A673 (cell line): ENCODE measurements at regions of chr10 and their contacts with region 1.

Region 1: DNA sequence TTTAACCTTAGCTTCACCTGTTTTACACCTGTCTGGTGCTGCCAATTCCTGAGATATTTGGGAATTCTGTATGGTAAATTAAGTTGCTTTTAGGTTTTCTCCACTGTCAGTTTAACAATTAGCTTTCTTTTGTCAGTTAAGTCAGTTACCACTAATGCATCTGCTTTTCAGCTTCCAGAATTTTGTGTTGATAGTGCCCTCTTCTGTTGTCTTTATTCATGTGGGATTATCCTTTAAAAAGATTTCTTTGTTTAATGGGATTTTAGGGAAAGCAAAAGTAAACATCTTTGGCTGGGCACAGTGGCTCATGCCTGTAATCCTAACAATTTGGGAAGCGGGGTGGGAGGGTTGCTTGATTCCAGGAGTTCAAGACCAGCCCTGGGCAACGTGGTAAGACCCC is 8.1 kb downstream of the TFAM start:
- DNase-seq: no peak
- H3K4me3 ChIP-seq: no peak overlapping the region
- H3K27ac ChIP-seq: no peak overlapping the region
- H3K4me1 ChIP-seq: no peaks in the 10 kb centered on the region
- H3K27me3 ChIP-seq: no peaks in the 10 kb centered on the region
- CTCF ChIP-seq: peak; percentile 29; the same call in 1 of the 2 replicates

Region 2: GRCh38 chr10:58438371-58438871 is 45.1 kb after region 1 on chr10:
- CTCF ChIA-PET with region 1: no interaction called
- POLR2A ChIA-PET with region 1: no interaction called
- intact Hi-C with region 1: no loop called
- DNase-seq: no peak
- H3K4me3 ChIP-seq: no peak overlapping the region
- H3K27ac ChIP-seq: no peak overlapping the region
- H3K4me1 ChIP-seq: peaks cover 8% of the 10 kb centered on the region
- H3K27me3 ChIP-seq: no peaks in the 10 kb centered on the region
- CTCF ChIP-seq: no peak

Region 3: GRCh38 chr10:58473976-58474375 is 80.7 kb after region 1 on chr10:
- CTCF ChIA-PET with region 1: interaction called, 7 read pairs
- POLR2A ChIA-PET with region 1: interaction called, 11 read pairs
- intact Hi-C with region 1: no loop called
- DNase-seq: no peak
- H3K4me3 ChIP-seq: no peak overlapping the region
- H3K27ac ChIP-seq: no peak overlapping the region
- H3K4me1 ChIP-seq: no peaks in the 10 kb centered on the region
- H3K27me3 ChIP-seq: no peaks in the 10 kb centered on the region
- CTCF ChIP-seq: no peak

Region 4: GRCh38 chr10:58488921-58489320 is 95.6 kb after region 1 on chr10:
- CTCF ChIA-PET with region 1: no interaction called
- POLR2A ChIA-PET with region 1: no interaction called
- intact Hi-C with region 1: no loop called
- DNase-seq: peak; percentile 52
- H3K4me3 ChIP-seq: no peak overlapping the region
- H3K27ac ChIP-seq: no peak overlapping the region
- H3K4me1 ChIP-seq: no peaks in the 10 kb centered on the region
- H3K27me3 ChIP-seq: no peaks in the 10 kb centered on the region
- CTCF ChIP-seq: no peak